ENCODE measurements at regions of chr9 and their contacts with region 1.

Region 1: GRCh38 chr9:2837915-2838314 is 6.0 kb downstream of the PUM3 start:
- DNase-seq: no peak
- H3K4me3 ChIP-seq: peak overlapping the region in 44 of 59 donors; percentile 0 to 60 (median 35)
- H3K27ac ChIP-seq: peak overlapping the region in 25 of 59 donors; percentile 1 to 76 (median 43)
- H3K27me3 ChIP-seq: no peaks in the 10 kb centered on the region
- CTCF ChIP-seq: peak in 37 of 56 donors; percentile 3 to 53 (median 31)

Region 2: GRCh38 chr9:2158111-2158610 is 679.8 kb before region 1 on chr9:
- intact Hi-C with region 1: loop called in 1 of 2 experiments (anchors 10 kb)
- DNase-seq: peak in 3 of 10 donors; percentile 12 to 40 (median 39)
- H3K4me3 ChIP-seq: peak overlapping the region; percentile 32 to 75 (median 59)
- H3K27ac ChIP-seq: peak overlapping the region in 53 of 59 donors; percentile 1 to 90 (median 79)
- H3K27me3 ChIP-seq: no peaks in the 10 kb centered on the region
- CTCF ChIP-seq: peak in 9 of 56 donors; percentile 7 to 21 (median 13)

Region 3: GRCh38 chr9:2859776-2860379 is 22.0 kb after region 1 on chr9:
- intact Hi-C with region 1: no loop called
- DNase-seq: peak; percentile 41 to 69 (median 56)
- H3K4me3 ChIP-seq: no peak overlapping the region
- H3K27ac ChIP-seq: no peak overlapping the region
- H3K27me3 ChIP-seq: peaks cover 0 to 2% (median 0%) of the 10 kb centered on the region in 45 donors
- CTCF ChIP-seq: peak; percentile 30 to 78 (median 64)

Region 4: DNA sequence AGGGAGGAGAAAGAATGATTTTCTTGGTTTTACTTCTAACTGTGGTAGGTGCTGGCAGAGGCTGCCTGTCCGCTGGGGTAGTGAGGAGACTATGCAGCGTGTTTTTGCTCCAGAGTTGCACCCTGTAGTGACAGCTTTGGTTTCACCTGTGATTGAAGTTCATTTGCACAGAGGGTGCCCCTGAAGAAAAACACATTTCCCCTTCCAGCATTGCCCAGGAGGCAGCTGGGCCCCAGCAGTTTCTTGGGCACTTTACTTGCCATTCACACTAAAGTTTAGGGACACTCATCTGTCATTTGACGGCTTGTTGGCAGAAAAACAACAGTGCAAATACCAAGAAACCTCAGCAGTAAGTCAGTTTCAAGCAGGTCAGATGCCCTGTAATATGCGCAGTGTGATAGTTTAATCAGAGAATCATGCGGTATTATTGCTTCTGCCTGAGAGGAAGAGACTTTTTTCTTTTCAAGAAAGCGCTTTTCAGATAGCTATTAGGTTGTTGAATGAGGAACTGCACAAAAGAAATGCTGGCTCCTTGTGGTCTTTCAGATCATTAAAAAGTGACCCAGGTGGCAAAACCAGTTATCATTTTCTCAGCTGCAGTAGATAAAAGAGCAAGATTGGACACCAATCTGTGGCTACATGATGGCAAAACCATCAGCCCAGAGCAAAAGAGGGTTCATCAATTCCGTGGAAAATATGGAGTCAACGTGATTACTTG is 142.1 kb after region 1 on chr9:
- intact Hi-C with region 1: no loop called
- DNase-seq: no peak
- H3K4me3 ChIP-seq: no peak overlapping the region
- H3K27ac ChIP-seq: no peak overlapping the region
- H3K27me3 ChIP-seq: peaks cover 0 to 5% (median 0%) of the 10 kb centered on the region in 45 donors
- CTCF ChIP-seq: no peak

Measured in dorsolateral prefrontal cortex (tissue), 120 donors.